ENCODE measurements at regions of chr19 and their contacts with region 1.

Region 1: DNA sequence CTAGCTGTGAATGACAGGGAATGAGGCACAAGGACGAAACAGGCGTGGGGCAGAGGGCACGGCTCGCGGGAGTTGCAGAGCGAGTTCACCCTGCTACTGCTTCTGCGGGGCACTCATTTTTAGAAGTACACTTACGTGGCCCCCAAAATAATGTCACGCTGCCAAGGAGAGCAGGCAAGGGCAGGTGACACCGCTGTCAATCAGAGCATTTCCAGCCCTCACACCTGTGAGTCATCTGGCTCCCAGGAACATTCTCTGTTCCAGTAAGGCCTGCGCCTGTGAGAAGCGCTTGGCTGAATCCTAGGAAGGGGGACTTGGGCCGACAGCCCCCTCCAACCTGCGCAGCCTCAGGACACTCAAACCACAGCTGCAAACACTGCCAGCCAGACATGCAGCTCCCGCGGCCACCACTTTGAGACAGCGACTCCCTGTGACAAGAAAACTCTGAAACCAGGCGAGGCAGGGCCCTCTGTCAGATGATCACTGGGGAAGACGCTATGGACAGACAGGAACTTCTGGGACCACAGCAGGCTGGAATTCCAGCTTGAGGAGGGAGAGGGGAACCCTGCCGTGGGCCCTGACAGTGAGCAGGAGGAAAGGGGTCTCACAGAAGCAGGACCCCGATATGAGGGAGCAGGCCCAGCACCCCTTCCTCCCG is 12.7 kb downstream of the DOT1L start:
- DNase-seq: no peak
- ATAC-seq: no peak
- H3K4me3 ChIP-seq: no peak overlapping the region
- H3K27ac ChIP-seq: no peak overlapping the region
- H3K4me1 ChIP-seq: peaks cover 5% of the 10 kb centered on the region
- H3K27me3 ChIP-seq: no peaks in the 10 kb centered on the region
- CTCF ChIP-seq: no peak
- EP300 ChIP-seq: no peak
- POLR2A ChIP-seq: no peak
- RAD21 ChIP-seq: no peak

Region 2: GRCh38 chr19:2438178-2438864 is 261.9 kb after region 1 on chr19:
- CTCF ChIA-PET with region 1: no interaction called
- POLR2A ChIA-PET with region 1: no interaction called
- RAD21 ChIA-PET with region 1: no interaction called
- SMC1A ChIA-PET with region 1: no interaction called
- in situ Hi-C with region 1: no loop called
- intact Hi-C with region 1: no loop called
- DNase-seq: no peak
- ATAC-seq: no peak
- H3K4me3 ChIP-seq: no peak overlapping the region
- H3K27ac ChIP-seq: no peak overlapping the region
- H3K4me1 ChIP-seq: no peaks in the 10 kb centered on the region
- H3K27me3 ChIP-seq: no peaks in the 10 kb centered on the region
- CTCF ChIP-seq: no peak
- EP300 ChIP-seq: no peak
- POLR2A ChIP-seq: peak; percentile 30
- RAD21 ChIP-seq: no peak

Region 3: DNA sequence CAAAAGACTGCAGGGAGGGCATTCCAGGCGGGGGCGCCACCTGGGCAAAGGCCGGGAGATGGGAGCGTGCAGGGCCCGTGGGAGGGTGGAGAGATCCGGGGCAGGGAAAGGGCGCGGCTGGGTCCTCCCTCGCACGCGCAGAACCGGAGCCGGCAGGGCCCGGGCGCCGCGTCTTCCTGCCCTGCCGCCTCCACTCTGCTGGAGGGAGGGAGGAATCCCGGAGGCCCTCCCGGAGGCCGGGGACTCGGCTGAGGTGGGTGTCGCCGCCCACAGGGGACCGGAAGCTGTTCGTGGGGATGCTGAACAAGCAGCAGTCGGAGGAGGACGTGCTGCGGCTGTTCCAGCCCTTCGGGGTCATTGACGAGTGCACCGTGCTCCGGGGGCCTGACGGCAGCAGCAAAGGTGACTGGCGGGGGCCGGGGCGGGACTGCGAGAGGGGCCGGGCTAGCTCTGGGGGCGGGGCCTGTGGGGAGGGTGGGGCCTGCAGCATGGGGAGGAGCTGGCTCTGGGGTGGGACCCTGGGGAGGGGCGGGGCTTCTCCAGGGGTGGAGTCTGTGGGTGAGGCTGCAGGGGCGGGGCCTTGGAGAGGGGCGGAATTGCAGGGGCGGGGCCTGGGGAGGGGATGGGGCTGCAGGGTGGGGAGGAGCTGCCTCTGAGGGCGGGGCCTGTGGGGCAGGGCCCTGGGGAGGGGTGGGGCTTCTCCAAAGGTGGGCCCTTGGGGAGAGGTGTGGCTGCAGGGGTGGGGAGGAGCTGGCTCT is 1099.3 kb after region 1 on chr19:
- CTCF ChIA-PET with region 1: no interaction called
- POLR2A ChIA-PET with region 1: interaction called, 10 read pairs
- RAD21 ChIA-PET with region 1: no interaction called
- SMC1A ChIA-PET with region 1: no interaction called
- in situ Hi-C with region 1: no loop called
- intact Hi-C with region 1: no loop called
- DNase-seq: peak; percentile 23
- ATAC-seq: peak; percentile 90
- H3K4me3 ChIP-seq: peak overlapping the region; percentile 71
- H3K27ac ChIP-seq: no peak overlapping the region
- H3K4me1 ChIP-seq: peaks cover 6% of the 10 kb centered on the region
- H3K27me3 ChIP-seq: no peaks in the 10 kb centered on the region
- CTCF ChIP-seq: peak in 2 of 3 experiments; percentile 54 to 59; a peak in 3 of 6 replicates
- EP300 ChIP-seq: no peak
- POLR2A ChIP-seq: peak; percentile 46; the same call in 1 of the 2 replicates
- RAD21 ChIP-seq: no peak

Measured in GM12878 (cell line).